ENCODE measurements at regions of chr9 and their contacts with region 1.

Region 1: DNA sequence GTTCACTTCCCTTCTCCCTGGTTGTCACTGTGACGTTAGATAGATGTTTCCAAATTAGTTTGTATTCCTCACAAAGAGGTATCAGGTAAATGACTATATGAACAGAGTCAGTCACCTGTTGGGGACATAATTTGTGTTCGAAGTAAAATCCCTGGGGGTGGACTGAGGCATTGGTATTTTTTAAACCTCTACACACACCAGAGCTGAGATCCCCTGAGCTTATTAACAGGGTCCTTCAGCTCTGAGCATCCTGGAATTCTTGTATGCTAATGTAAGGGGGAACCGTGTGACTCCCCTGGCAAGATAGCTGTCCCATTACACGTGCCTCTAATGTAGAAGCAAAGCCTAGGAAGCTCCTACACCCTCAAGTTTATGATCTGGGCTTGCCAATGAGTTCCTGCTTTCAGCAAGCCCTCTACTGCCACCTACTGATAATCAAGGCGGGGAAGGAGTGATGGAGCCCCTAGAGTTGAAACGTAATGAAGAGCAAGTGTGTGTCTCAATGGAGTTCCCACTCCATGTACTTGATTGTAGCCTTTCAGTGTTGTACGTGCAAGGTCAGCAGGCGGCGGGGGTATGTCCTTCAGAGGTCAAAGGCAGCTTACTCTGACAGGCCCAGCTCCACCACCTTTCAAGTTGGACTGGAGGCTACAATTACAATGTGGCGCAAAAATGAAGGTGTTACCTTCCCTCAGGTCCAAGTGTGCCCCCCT is 14.4 kb downstream of the PRKACG start:
- DNase-seq: peak; percentile 58
- H3K4me3 Mint-ChIP-seq: no peak overlapping the region
- H3K27ac Mint-ChIP-seq: peak overlapping the region; percentile 61
- H3K4me1 Mint-ChIP-seq: peaks cover 38% of the 10 kb centered on the region
- H3K27me3 Mint-ChIP-seq: peaks cover 2% of the 10 kb centered on the region

Region 2: GRCh38 chr9:68584189-68585033 is 415.1 kb before region 1 on chr9:
- intact Hi-C with region 1: loop called (anchors 1 kb)
- DNase-seq: peak; percentile 74
- H3K4me3 Mint-ChIP-seq: no peak overlapping the region
- H3K27ac Mint-ChIP-seq: no peak overlapping the region
- H3K4me1 Mint-ChIP-seq: peaks cover 11% of the 10 kb centered on the region
- H3K27me3 Mint-ChIP-seq: peaks cover 6% of the 10 kb centered on the region

Region 3: DNA sequence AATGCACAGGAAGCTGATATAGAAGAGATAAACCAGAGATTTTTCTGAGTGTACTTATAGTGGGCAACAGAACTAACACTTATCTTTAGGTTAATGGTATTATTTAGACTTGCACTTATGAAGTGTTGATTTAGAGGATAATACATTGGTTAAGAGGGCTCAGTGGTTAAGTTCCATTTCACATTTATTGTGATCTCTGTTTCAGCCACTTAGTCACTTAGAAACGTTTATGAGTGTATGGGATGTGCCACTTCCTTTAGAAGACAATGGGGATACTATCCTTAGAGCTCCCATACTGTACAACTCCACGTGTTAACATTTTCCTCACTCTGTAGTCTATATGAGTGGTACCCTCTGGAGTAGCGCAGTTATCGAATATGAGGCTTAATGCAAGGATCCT is 237.0 kb before region 1 on chr9:
- intact Hi-C with region 1: no loop called
- DNase-seq: no peak
- H3K4me3 Mint-ChIP-seq: no peak overlapping the region
- H3K27ac Mint-ChIP-seq: no peak overlapping the region
- H3K4me1 Mint-ChIP-seq: peaks cover 14% of the 10 kb centered on the region
- H3K27me3 Mint-ChIP-seq: peaks cover 6% of the 10 kb centered on the region

Region 4: DNA sequence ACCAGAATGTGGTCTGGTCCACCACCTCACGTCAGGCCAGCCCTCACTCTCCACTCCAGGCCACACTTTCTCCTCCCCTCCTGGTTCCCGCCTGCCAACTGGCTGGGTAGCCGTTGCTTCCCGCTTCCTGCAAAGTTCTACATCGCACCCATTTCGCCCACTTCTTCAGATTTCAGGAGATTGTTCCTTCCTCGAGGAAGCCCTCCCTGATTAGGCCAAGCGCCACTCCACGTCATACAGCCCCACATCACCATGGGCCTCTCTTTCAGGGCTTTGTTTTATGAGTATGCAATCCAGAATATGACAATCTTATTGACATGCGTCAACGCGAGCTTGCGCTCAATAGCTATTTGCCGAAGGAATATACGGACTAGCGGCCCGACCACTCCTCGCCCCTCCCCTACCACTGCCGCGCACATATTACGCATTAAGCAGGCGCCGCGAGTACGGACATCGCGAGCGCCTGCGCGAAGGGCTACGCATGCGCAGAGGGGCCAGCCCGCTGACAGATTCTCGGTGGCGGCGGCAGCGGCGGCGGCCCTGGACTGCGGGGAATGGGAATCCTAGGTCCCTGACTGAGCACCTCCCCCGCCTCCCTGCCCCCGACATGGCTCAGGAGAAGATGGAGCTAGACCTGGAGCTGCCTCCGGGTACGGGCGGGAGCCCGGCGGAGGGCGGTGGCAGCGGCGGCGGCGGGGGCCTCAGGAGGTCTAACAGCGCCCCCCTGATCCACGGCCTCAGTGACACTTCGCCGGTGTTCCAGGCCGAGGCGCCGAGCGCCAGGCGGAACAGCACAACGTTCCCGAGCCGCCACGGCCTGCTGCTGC is 219.8 kb before region 1 on chr9:
- intact Hi-C with region 1: loop called (anchors 1 kb)
- DNase-seq: peak; percentile 89
- H3K4me3 Mint-ChIP-seq: no peak overlapping the region
- H3K27ac Mint-ChIP-seq: no peak overlapping the region
- H3K4me1 Mint-ChIP-seq: peaks cover 4% of the 10 kb centered on the region
- H3K27me3 Mint-ChIP-seq: no peaks in the 10 kb centered on the region

Region 5: GRCh38 chr9:68844631-68845612 is 154.6 kb before region 1 on chr9:
- intact Hi-C with region 1: loop called (anchors 5 kb)
- DNase-seq: no peak
- H3K4me3 Mint-ChIP-seq: no peak overlapping the region
- H3K27ac Mint-ChIP-seq: peak overlapping the region; percentile 65
- H3K4me1 Mint-ChIP-seq: peaks cover 24% of the 10 kb centered on the region
- H3K27me3 Mint-ChIP-seq: no peaks in the 10 kb centered on the region

Region 6: GRCh38 chr9:68919661-68920060 is 79.9 kb before region 1 on chr9:
- intact Hi-C with region 1: loop called (anchors 5 kb)
- DNase-seq: no peak
- H3K4me3 Mint-ChIP-seq: no peak overlapping the region
- H3K27ac Mint-ChIP-seq: no peak overlapping the region
- H3K4me1 Mint-ChIP-seq: peaks cover 45% of the 10 kb centered on the region
- H3K27me3 Mint-ChIP-seq: peaks cover 3% of the 10 kb centered on the region

Region 7: DNA sequence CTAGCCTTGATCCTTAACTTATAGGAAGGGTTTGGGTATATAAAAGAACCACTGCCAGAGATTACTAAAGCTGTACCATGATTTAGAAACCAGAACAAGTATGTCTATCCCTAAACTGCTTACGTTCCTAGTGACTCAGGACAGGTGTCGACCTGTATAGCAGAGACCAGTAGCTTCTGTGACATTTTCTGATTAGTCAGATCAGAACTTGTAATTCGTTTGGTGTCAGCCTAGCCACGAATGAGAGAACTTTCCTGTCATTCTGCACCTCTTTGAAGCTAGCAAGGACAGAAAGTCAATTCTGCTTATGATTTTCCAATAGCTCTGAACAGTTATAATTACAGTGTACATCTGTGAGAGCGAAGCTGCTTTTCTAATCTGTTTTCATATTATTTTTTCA is 25.1 kb before region 1 on chr9:
- intact Hi-C with region 1: loop called (anchors 1 kb)
- DNase-seq: peak; percentile 22
- H3K4me3 Mint-ChIP-seq: peak overlapping the region; percentile 60
- H3K27ac Mint-ChIP-seq: peak overlapping the region; percentile 87
- H3K4me1 Mint-ChIP-seq: peaks cover 69% of the 10 kb centered on the region
- H3K27me3 Mint-ChIP-seq: no peaks in the 10 kb centered on the region